Calu3 (cell line): ENCODE measurements at regions of chr6 and their contacts with region 1.

Region 1: DNA sequence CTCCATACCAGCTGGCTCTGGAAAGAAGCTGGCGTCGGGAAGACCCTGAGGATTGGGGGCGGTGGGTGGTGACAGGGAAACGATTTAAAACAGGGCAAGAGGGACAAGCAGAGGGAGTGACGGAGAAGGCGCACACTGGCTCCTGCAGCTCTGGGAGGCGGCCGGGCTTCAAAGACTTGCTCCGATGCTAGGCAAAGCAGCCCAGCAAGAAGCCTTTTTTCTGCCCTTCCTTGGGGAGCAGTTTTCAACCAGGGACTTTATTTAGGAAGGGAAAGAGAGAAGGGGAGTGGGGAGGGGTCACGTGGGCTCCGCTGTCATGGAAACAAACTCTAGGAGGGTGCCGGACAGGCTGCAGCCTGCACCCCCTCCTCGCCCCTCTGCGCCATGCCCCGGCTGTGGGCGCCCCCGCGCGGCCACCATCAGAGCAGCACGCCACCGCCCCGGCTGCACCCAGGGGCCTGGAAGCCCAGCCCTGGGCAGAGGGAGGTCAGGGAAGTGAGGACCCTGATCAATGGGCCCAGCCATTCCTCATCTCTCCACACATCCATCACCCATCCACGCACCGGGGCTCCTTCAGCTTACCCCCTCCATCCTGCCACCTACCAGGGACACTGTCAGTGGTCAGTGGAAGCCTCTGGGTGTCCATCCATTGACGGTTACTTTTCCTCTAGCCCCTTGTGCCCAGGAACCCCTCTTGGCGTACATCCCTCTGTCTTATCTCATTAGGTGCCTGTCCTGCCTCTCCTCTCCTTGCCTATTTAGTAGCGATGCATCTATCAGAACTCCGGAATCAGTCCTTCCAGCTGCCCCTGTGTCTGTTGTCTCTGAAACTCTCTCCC is 66.6 kb upstream of the CCDC167 start:
- DNase-seq: peak; percentile 81
- H3K4me3 Mint-ChIP-seq: no peak overlapping the region
- H3K27ac Mint-ChIP-seq: no peak overlapping the region
- H3K4me1 Mint-ChIP-seq: no peaks in the 10 kb centered on the region
- H3K27me3 Mint-ChIP-seq: peaks cover 89% of the 10 kb centered on the region
- CTCF ChIP-seq: peak; percentile 96

Region 2: GRCh38 chr6:37369321-37370201 is 196.8 kb before region 1 on chr6:
- CTCF ChIA-PET with region 1: no interaction called
- intact Hi-C with region 1: loop called (anchors 10 kb)
- DNase-seq: no peak
- H3K4me3 Mint-ChIP-seq: no peak overlapping the region
- H3K27ac Mint-ChIP-seq: no peak overlapping the region
- H3K4me1 Mint-ChIP-seq: peaks cover 9% of the 10 kb centered on the region
- H3K27me3 Mint-ChIP-seq: no peaks in the 10 kb centered on the region
- CTCF ChIP-seq: no peak

Region 3: DNA sequence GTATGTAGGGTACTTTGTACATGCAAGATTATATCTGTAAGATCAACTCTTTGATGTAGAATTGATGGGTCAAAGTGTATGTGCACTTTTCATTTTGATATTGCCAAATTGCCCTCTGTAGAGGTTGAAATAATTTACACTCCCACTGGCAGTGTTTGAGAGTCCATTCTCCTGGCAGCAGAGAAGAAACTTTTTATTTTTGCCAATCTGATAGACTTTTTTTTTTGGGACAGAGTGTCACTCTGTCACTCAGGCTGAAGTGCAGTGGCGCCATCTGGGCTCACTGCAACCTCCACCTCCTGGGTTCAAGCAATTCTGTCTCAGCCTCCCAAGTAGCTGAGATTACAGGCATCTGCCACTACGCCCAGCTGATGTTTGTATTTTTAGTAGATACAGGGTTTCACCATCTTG is 452.4 kb after region 1 on chr6:
- CTCF ChIA-PET with region 1: no interaction called
- intact Hi-C with region 1: no loop called
- DNase-seq: peak; percentile 4
- H3K4me3 Mint-ChIP-seq: no peak overlapping the region
- H3K27ac Mint-ChIP-seq: no peak overlapping the region
- H3K4me1 Mint-ChIP-seq: peaks cover 8% of the 10 kb centered on the region
- H3K27me3 Mint-ChIP-seq: no peaks in the 10 kb centered on the region
- CTCF ChIP-seq: no peak